Posterior vena cava (tissue), 2 donors: ENCODE measurements at regions of chr2 and their contacts with region 1.

Region 1: DNA sequence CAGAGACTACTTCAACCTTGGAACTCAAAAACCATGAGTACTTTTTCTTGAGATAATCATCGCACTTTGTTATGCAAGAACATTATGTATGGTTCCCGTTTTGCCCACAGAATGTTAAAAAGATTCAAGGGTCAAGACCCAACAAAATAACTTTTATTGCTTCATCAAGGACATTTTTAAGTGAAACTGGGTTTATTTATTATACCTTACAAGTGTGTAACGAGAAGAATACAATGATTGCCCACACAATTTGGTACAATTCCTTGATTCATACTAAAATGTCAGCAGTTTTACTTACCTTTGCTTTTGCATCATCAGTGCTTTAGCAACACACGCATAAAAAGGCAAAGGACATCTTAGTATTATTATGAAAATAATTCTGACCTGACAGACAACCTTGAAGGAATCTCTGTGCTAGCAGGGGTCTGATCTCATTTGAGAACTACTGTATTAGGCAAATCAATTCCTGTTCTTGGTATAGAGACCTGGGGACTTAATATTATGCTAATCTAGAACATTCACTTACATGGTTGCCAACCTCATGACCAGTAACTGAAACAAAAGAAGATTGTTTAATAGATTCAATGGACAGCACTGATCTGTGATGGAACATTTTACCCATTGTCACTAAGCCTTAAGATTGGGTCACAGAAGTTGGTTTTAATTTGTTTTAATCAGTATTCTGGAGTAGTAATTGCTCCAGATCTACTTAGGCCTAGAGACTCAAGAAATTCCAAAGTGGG is 16.2 kb downstream of the CCDC88A start:
- DNase-seq: no peak

Region 2: DNA sequence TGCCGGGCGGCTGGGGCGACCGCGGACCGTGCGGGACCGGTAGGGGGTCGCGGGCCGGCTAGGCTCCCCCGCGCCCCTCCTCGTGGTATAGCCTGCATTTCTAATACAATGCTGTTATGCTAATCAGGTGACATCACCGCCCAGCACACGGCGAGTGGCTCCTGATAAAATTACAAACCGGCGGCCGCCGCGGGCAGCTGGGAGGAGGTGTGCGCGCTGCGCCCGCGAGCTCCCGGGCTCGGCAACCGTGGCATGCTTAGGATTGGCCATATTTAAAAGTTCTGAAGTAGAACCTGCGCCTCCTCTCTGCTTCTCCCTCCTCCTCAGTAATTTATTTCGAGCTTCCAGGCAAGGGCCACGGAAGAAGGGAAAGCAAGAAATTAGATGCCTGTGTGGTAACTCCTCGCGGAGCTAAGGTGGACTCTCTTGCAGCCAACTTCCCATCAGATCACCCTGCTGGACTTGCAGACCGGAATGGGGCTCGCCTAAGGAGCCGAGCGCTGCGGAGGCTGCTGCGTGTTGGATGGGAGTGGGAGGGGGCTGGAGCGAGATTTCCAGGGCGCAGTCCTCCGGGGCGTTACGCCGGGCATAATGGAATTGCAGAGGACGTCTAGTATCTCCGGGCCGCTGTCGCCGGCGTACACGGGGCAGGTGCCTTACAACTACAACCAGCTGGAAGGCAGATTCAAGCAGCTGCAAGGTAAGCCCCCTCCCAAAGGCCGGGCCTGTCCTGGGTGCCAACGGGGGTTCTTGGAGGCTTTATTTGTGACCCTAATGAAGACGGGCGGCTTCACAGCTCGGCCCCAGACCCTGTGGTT is 845.0 kb before region 1 on chr2:
- intact Hi-C with region 1: loop called in 1 of 2 experiments (anchors 5 kb)
- DNase-seq: peak; percentile 89